ENCODE measurements at regions of chr11 and their contacts with region 1.

Region 1: DNA sequence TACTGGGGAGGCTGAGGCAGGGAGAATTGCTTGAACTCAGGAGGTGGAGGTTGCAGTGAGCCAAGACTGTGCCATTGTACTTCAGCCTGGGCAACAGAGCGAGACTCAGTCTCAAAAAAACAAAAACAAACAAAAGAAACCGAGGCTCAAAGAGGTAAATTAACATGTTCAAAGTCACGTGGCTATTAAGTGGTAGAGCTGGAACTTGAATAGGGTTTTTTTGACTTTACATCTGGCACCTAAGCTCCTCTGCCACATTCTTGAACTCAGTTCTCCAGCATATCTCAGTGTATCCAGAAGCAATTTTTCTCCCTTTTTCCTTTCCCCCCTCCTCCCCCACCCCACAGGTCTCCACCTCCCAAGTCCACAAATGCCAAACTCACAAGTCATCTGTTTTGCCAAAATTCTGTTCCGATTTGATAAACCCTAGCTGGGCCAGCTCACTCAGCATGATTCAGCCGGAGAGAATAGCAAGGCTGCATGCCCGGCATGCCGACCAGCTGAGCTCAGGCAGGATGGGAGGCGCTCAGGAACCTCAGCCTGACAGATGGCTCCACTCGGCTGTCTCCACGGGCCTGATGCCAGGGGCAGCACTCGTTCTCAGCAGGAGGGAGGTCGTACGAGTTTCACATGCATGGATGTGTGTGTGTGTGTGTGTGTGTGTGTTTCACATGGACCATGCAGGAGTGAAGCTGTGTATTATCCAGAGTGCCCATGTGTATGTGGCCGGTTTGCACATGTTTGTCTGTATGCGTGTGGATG is 63.2 kb upstream of the RRAS2 start:
- DNase-seq: peak; percentile 98
- H3K4me3 ChIP-seq: no peak overlapping the region
- H3K27ac ChIP-seq: peak overlapping the region; percentile 69
- H3K4me1 ChIP-seq: peaks cover 44% of the 10 kb centered on the region
- H3K27me3 ChIP-seq: no peaks in the 10 kb centered on the region
- CTCF ChIP-seq: no peak
- POLR2A ChIP-seq: peak; percentile 69

Region 2: GRCh38 chr11:14308114-14308896 is 113.9 kb before region 1 on chr11:
- CTCF ChIA-PET with region 1: interaction called, 261 read pairs
- POLR2A ChIA-PET with region 1: interaction called, 8 read pairs
- dilution Hi-C with region 1: no loop called
- intact Hi-C with region 1: no loop called
- DNase-seq: peak; percentile 53
- H3K4me3 ChIP-seq: no peak overlapping the region
- H3K27ac ChIP-seq: no peak overlapping the region
- H3K4me1 ChIP-seq: peaks cover 4% of the 10 kb centered on the region
- H3K27me3 ChIP-seq: no peaks in the 10 kb centered on the region
- CTCF ChIP-seq: peak; percentile 42 to 62
- POLR2A ChIP-seq: no peak

Region 3: GRCh38 chr11:14358729-14359439 is 63.3 kb before region 1 on chr11 and contains the start of gene RRAS2:
- CTCF ChIA-PET with region 1: interaction called, 5 read pairs
- POLR2A ChIA-PET with region 1: interaction called, 4 read pairs
- dilution Hi-C with region 1: no loop called
- intact Hi-C with region 1: loop called (anchors 1 kb)
- DNase-seq: peak; percentile 77
- H3K4me3 ChIP-seq: peak within 1 kb of the TSS; percentile 57 to 84 (median 75)
- H3K27ac ChIP-seq: peak within 1 kb of the TSS; percentile 46
- H3K4me1 ChIP-seq: peaks cover 9% of the 10 kb centered on the region
- H3K27me3 ChIP-seq: no peaks in the 10 kb centered on the region
- CTCF ChIP-seq: no peak
- POLR2A ChIP-seq: peak; percentile 85
- total RNA-seq, gene RRAS2: 80.5 and 84.4 TPM in 2 replicates

Region 4: GRCh38 chr11:14393889-14394288 is 28.3 kb before region 1 on chr11:
- CTCF ChIA-PET with region 1: interaction called, 16 read pairs
- POLR2A ChIA-PET with region 1: interaction called, 3 read pairs
- dilution Hi-C with region 1: no loop called
- intact Hi-C with region 1: no loop called
- DNase-seq: no peak
- H3K4me3 ChIP-seq: no peak overlapping the region
- H3K27ac ChIP-seq: no peak overlapping the region
- H3K4me1 ChIP-seq: peaks cover 9% of the 10 kb centered on the region
- H3K27me3 ChIP-seq: no peaks in the 10 kb centered on the region
- CTCF ChIP-seq: no peak
- POLR2A ChIP-seq: no peak

Region 5: DNA sequence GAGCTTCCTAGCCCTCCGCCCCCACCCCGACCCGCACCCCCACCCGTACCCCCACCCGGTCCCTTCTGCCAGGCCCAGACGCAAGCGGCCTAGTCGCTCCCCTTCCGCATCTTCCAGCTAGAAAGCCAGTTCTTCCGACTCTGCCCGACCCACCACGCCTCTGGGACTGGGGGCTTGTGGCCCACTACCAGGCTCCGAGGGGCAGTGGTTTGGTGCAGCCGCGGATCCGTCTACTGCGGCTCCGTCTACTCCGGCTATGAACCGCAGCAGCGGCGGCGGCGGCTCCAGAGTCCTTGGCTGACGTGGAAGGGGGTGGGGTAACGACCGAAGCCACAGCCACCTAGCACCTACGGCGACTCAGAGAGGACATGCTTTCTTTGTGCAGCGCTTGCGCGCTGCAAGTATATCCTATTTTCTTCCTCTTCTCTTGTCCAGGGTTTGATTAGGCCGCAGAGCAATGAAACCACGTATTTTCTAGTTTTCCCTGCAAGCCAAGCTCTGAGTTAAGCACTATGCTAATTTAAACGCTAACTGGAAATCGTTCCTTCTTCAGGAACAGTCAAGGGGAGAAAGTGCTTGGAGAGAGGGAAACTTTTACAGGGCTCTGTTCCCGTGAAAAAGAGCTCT is 77.4 kb after region 1 on chr11 and contains the start of gene COPB1:
- CTCF ChIA-PET with region 1: no interaction called
- POLR2A ChIA-PET with region 1: no interaction called
- dilution Hi-C with region 1: no loop called
- intact Hi-C with region 1: loop called (anchors 2 kb)
- DNase-seq: peak; percentile 94
- H3K4me3 ChIP-seq: peak within 1 kb of the TSS; percentile 62 to 95 (median 95)
- H3K27ac ChIP-seq: peak within 1 kb of the TSS; percentile 82
- H3K4me1 ChIP-seq: peaks cover 20% of the 10 kb centered on the region
- H3K27me3 ChIP-seq: no peaks in the 10 kb centered on the region
- CTCF ChIP-seq: no peak
- POLR2A ChIP-seq: peak; percentile 97
- total RNA-seq, gene COPB1: 145 and 146 TPM in 2 replicates

Region 6: DNA sequence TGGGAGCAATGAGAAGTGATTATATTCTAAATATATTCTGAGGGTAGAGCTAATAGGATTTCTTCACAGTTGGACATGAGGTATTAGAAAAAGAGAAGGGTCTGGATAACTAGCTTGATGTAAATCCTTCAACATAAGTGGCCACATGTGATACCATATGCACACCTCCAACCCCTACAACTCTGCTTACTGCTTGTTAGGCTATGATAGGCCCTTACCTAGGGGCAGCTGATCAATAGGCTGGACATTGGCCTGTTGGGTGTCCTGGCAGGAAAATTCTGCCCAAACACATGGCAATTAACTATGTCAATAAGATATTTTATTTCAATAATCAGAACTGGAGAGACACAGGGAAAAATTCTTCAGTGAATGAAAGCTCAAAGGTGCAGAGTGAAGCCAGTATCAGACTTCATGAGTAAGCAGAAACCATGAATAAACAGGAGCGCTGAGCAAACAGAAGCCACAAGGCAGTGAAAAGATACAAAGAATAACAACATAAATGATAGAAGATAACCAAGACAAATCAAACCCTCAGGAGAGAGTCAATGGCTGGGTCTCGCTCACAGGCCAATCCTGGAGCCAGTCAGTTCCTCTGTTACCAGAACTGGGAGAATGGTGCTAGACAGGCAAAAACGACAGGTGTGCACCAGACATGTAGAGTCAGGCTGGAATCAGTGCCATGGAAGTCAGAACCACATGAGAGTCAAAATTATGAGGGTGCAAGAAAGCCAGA is 144.3 kb after region 1 on chr11:
- CTCF ChIA-PET with region 1: no interaction called
- POLR2A ChIA-PET with region 1: no interaction called
- dilution Hi-C with region 1: no loop called
- intact Hi-C with region 1: no loop called
- DNase-seq: no peak
- H3K4me3 ChIP-seq: no peak overlapping the region
- H3K27ac ChIP-seq: no peak overlapping the region
- H3K4me1 ChIP-seq: no peaks in the 10 kb centered on the region
- H3K27me3 ChIP-seq: peaks cover 0 to 3% of the 10 kb centered on the region in 2 experiments
- CTCF ChIP-seq: no peak
- POLR2A ChIP-seq: no peak

Measured in endothelial cell of umbilical vein (primary cell).